Activated CD4-positive, alpha-beta T cell treated with anti-CD3 and anti-CD28 coated beads, Interleukin-2, amount 10 ng/mL, durations not matched to agents 24 days and 14 days (primary cell): ENCODE measurements at regions of chr1 and their contacts with region 1.

Region 1: GRCh38 chr1:169711469-169712281 is at the start of gene SELL:
- DNase-seq: peak; percentile 94
- H3K4me3 Mint-ChIP-seq: peak within 1 kb of the TSS; percentile 89
- H3K27ac Mint-ChIP-seq: peak within 1 kb of the TSS; percentile 90
- H3K4me1 Mint-ChIP-seq: peaks cover 34% of the 10 kb centered on the region
- H3K27me3 Mint-ChIP-seq: peaks cover 22% of the 10 kb centered on the region
- total RNA-seq, gene SELL: 82.3 and 92.7 TPM in 2 replicates

Region 2: DNA sequence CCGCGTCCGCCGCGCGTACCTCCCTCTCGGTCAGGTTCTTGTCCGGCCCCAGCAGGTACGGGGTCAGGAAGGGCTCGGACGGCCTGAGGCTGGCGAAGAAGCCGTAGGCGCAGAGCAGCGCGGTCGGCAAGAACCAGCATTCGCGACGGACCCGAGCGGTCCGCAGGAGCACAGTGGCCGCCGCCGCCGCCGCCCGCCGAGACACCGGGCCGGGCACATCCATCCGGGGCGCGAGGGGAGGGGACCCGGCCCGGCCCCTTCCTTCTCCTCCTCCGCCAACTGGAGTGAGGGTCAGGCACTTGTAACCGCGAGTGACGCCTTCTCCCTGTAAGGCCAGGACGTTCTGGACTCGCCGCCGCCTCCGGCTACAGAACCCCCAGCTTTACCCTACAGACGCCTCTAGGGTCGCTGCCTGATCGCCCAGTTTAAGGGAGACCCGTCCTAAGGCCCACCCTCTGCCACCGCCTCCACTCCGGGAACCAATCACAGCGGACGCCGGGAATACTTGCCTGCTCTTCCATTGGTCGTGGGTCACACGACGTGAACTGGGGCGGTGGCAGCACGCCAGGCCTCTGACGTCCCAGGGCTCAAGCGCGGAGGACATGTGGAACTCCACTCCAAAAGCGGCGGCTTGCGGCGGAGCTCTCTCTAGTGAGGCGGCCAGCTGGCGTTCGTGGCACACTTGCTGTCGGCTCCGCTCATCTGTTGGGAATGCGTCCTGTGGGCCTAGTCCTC is 226.0 kb before region 1 on chr1 and contains the start of gene SLC19A2:
- intact Hi-C with region 1: loop called (anchors 2 kb)
- DNase-seq: peak; percentile 98
- H3K4me3 Mint-ChIP-seq: peak within 1 kb of the TSS; percentile 98
- H3K27ac Mint-ChIP-seq: peak within 1 kb of the TSS; percentile 94
- H3K4me1 Mint-ChIP-seq: peaks cover 46% of the 10 kb centered on the region
- H3K27me3 Mint-ChIP-seq: no peaks in the 10 kb centered on the region
- total RNA-seq, gene SLC19A2: 12.1 and 12.2 TPM in 2 replicates

Region 3: DNA sequence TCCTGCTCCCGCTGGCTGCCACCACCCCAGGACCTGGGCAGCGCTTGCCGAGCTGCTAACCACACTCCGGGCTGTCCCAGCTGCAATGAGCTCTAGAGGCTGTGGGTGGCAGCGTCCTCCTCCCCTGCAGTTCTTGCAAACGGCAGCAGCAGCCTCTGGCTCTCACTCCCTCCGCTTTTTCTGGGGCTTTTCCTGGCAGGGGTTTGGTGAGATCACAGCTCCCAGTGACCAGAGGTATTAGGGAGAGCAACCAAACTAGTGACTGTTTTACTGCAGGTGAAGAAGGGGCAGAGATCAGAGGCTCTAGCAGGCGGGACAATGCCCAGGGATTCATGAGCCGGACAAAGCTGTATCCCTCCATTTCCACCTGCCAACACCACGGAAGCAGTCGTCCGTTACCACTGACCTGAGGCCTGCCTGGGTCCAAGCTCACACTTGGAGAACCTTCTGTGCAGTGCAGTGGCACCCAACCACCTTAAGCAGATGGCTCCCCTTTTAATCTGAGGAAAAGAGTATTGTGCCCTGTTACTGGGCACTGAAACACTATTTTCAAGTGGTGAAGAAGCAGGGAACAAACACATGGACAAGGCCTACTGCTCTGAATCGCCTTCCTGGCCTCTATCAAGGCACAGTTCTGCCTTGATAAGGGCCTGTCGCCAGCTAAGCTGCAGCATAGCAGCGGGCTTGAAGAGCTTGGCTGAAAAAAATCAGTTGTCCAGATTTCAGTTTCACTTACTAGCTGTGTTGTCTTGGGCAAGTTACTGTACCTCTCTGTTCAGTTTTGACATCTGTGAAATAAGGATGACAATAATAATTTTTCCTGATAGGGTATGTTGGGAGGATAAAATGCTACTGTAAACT is 125.0 kb before region 1 on chr1 and contains the start of gene F5:
- intact Hi-C with region 1: loop called (anchors 1 kb)
- DNase-seq: peak; percentile 92
- H3K4me3 Mint-ChIP-seq: peak within 1 kb of the TSS; percentile 95
- H3K27ac Mint-ChIP-seq: peak within 1 kb of the TSS; percentile 92
- H3K4me1 Mint-ChIP-seq: peaks cover 62% of the 10 kb centered on the region
- H3K27me3 Mint-ChIP-seq: no peaks in the 10 kb centered on the region
- total RNA-seq, gene F5: 46.3 and 51.3 TPM in 2 replicates

Region 4: GRCh38 chr1:169670836-169671235 is 40.8 kb before region 1 on chr1:
- intact Hi-C with region 1: loop called (anchors 1 kb)
- DNase-seq: peak; percentile 55
- H3K4me3 Mint-ChIP-seq: no peak overlapping the region
- H3K27ac Mint-ChIP-seq: peak overlapping the region; percentile 57
- H3K4me1 Mint-ChIP-seq: peaks cover 34% of the 10 kb centered on the region
- H3K27me3 Mint-ChIP-seq: no peaks in the 10 kb centered on the region

Region 5: GRCh38 chr1:169794530-169795416 is 83.1 kb after region 1 on chr1 and contains the start of gene METTL18:
- intact Hi-C with region 1: loop called (anchors 2 kb)
- DNase-seq: peak; percentile 98
- H3K4me3 Mint-ChIP-seq: peak within 1 kb of the TSS; percentile 99
- H3K27ac Mint-ChIP-seq: peak within 1 kb of the TSS; percentile 97
- H3K4me1 Mint-ChIP-seq: peaks cover 45% of the 10 kb centered on the region
- H3K27me3 Mint-ChIP-seq: no peaks in the 10 kb centered on the region
- total RNA-seq, gene METTL18: 9.3 and 10.3 TPM in 2 replicates

Region 6: DNA sequence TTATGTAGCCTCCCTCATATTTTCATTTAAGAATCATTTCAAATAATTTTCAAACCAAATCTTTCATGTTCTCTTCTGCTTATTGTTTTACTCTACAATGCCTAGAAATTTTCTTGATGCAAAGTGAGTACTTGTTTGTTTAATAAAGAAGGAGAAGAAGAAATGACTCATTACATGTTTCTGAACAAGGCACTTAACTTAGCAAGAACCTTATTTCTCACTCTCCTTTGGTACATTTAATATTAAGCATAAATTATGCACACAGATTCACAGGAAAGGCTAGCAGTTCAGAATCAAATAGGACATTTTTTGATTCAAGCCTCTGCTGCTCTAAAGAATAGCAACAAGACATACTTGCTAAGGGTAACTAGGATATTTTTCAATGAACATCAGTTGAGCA is 173.0 kb after region 1 on chr1:
- intact Hi-C with region 1: no loop called
- DNase-seq: no peak
- H3K4me3 Mint-ChIP-seq: no peak overlapping the region
- H3K27ac Mint-ChIP-seq: no peak overlapping the region
- H3K4me1 Mint-ChIP-seq: peaks cover 20% of the 10 kb centered on the region
- H3K27me3 Mint-ChIP-seq: no peaks in the 10 kb centered on the region

Region 7: DNA sequence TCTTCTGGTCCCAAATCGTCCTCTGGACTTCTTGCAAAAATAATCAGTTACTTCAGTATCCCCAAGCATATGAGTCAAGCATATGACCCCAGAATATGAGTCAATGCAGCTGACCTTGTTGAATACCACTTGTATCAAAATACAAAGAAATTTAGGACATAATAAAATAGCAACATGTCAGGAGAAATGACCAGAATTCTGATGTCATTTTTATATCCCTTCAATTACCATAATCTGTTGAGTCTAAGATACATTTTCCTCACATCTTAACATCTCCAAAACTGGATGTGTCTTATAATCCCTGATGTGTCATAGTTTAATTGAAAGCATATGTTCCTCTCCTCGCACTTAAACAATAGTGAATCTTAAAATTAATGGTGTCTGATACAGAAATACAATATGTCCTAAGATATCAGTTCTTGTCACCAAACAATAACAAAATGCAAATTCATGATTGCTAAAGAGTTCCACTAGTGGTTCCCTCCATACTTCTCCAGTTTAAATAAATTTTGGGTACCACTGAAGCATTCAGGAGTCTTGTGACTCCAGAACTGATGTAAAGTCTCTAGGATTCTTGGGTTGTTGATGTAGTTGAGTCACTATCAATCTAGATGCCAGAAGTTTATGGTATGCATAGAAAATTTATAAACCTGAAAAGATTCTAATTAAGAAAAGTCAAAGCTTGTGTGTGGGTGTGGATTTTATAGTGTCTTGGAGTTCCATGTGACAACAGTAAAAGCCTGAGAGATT is 321.0 kb after region 1 on chr1:
- intact Hi-C with region 1: no loop called
- DNase-seq: no peak
- H3K4me3 Mint-ChIP-seq: no peak overlapping the region
- H3K27ac Mint-ChIP-seq: no peak overlapping the region
- H3K4me1 Mint-ChIP-seq: peaks cover 6% of the 10 kb centered on the region
- H3K27me3 Mint-ChIP-seq: no peaks in the 10 kb centered on the region